ENCODE measurements at regions of chr14 and their contacts with region 1.

Region 1: DNA sequence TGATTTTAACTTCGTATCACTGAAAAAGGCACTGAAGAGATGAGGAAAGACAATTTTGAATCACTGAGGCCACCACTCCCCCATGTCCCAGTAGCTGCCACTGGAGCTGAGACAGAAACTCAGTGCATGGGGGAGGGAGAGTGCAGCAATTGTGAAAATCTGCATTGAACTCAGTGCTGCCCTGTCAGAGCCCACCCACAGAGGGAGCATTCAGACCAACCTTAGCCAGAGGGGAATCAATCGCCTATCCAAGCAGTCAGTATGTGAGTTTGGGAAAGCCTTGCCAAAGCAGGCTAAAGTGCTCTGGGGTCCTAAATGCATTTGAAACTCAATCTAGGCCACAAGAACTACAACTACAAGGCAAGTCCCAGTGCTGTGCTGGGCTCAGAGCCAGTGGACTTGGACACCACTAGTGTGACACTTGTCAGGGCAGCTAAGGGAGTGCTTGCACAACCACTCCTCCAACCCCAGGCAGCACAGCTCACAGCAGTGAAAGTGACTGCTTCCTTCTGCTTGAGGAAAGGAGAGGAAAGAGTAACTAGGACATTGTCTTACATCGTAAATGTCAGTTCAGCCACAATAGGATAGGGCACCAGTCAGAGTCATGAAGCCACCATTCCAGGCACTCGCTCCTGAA is 13.3 kb downstream of the RNASE3 start:
- DNase-seq: no peak
- H3K4me3 ChIP-seq: no peak overlapping the region
- H3K27ac ChIP-seq: no peak overlapping the region
- H3K4me1 ChIP-seq: no peaks in the 10 kb centered on the region
- H3K27me3 ChIP-seq: no peaks in the 10 kb centered on the region
- CTCF ChIP-seq: no peak

Region 2: GRCh38 chr14:20934148-20934762 is 29.7 kb after region 1 on chr14:
- CTCF ChIA-PET with region 1: no interaction called
- POLR2A ChIA-PET with region 1: no interaction called
- intact Hi-C with region 1: loop called (anchors 5 kb)
- DNase-seq: peak; percentile 73
- H3K4me3 ChIP-seq: no peak overlapping the region
- H3K27ac ChIP-seq: no peak overlapping the region
- H3K4me1 ChIP-seq: no peaks in the 10 kb centered on the region
- H3K27me3 ChIP-seq: no peaks in the 10 kb centered on the region
- CTCF ChIP-seq: peak; percentile 93

Region 3: DNA sequence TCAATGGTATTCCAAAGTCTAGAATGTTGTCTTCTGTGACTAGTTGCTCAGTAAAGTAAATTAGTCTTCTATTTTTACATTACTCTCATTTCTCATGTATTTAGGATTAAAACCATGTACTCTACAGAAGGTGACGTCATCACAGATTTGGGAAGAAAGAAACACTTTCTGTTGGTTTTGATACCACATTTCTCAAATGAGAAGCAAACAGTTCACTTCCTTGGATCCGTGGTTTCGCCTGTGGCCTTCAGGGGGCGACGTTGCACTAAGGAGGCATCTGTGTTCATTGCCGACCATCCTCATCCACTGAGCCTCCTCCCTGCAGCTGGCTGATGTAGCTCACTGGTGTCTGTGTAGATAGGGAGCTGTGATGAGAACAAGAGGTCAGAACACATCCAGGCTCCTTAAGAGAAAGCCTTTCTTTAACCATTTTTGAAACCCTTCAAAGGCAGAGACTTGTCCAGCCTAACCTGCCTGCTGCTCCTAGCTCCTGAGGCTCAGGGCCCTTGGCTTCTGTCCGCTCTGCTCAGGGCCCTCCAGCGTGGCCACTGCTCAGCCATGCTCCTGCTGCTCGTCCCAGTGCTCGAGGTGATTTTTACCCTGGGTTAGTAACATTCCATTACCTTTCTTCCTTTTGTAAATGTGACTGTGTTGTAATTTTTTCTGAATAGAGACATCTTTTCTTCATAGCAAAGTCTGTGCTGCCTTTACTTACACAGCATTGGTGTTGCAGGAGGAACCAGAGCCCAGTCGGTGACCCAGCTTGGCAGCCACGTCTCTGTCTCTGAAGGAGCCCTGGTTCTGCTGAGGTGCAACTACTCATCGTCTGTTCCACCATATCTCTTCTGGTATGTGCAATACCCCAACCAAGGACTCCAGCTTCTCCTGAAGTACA is 989.7 kb after region 1 on chr14:
- CTCF ChIA-PET with region 1: no interaction called
- POLR2A ChIA-PET with region 1: no interaction called
- intact Hi-C with region 1: no loop called
- DNase-seq: peak; percentile 41
- H3K4me3 ChIP-seq: no peak overlapping the region
- H3K27ac ChIP-seq: no peak overlapping the region
- H3K4me1 ChIP-seq: no peaks in the 10 kb centered on the region
- H3K27me3 ChIP-seq: no peaks in the 10 kb centered on the region
- CTCF ChIP-seq: peak; percentile 73

Measured in A673 (cell line).